Activated T-helper 2 cell treated with anti-CD3 and anti-CD28 coated beads, Interferon-gamma antibody, Interleukin-2, Interleukin-4, amounts not matched to agents 10 μg/mL and 5 μg/mL and 100 μg/mL, durations not matched to agents 14 hours and 24 hours and 36 hours (primary cell): ENCODE measurements at regions of chr15 and their contacts with region 1.

Region 1: DNA sequence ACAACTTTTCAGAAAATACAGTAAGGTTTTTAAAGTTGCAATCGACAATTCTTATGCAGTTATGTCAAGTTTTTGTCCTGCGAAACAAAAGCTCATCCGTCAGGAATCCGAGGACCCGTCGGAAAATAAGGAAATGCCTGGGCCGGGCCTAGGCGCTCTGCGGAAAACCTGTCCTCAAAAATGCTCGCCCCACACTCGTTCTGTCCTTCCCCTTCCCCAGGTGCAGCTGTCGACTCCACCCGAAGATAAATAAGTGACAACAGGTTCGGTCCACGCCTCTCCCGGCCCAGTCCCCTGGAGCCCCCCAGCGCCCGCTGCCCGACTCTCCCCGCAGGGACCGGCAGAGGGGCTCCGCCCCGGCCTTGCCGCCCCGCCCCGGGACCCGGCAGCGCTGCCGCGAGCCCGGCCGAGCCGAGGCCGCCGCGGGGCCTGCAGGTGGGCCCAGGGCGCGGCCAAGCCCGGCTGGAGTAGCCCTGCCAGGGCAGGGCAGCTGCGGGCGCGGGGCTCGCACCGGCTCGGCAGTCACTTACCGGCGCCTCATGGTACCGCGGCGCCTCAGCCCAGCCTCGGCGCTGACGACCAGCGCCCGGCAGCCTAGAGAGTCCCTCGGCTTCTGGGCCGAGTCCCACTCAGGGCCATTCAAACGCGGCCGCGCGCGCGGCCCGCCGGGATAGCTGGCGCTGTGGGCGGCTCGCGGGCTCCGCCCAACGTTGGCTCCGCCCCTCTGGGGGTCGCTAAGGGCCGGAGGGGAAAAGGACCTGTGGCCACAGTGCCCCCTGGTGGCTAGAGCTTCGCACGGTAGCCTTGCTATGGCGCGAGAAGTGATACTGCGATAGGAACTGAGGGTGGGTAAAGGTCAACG is at the start of gene KATNBL1:
- DNase-seq: peak; percentile 89
- H3K4me3 Mint-ChIP-seq: peak within 1 kb of the TSS; percentile 87
- H3K27ac Mint-ChIP-seq: peak within 1 kb of the TSS; percentile 78
- H3K4me1 Mint-ChIP-seq: peaks cover 20% of the 10 kb centered on the region
- H3K27me3 Mint-ChIP-seq: no peaks in the 10 kb centered on the region
- total RNA-seq, gene KATNBL1: 42.0 and 42.3 TPM in 2 replicates

Region 2: DNA sequence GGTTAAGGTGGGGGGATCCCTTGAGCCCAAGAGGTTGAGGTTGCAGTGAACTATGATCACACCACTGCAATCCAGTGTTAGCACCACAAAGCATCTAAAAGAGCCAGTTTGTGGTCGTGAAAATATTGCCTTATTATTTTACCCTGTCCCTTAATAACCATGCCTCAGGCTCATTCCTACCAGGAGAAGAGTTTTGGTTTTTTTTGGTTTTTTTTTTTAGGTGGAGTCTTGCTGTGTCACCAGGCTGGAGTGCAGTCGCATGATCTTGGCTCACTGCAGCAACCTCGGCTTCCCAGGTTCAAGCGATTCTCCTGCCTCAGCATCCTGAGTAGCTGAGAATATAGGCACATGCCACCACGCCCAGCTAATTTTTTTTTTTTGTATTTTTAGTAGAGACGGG is 152.7 kb before region 1 on chr15:
- intact Hi-C with region 1: loop called (anchors 1 kb)
- DNase-seq: no peak
- H3K4me3 Mint-ChIP-seq: no peak overlapping the region
- H3K27ac Mint-ChIP-seq: no peak overlapping the region
- H3K4me1 Mint-ChIP-seq: no peaks in the 10 kb centered on the region
- H3K27me3 Mint-ChIP-seq: peaks cover 5% of the 10 kb centered on the region

Region 3: GRCh38 chr15:34109797-34110663 is 99.6 kb before region 1 on chr15:
- intact Hi-C with region 1: loop called (anchors 1 kb)
- DNase-seq: no peak
- H3K4me3 Mint-ChIP-seq: no peak overlapping the region
- H3K27ac Mint-ChIP-seq: no peak overlapping the region
- H3K4me1 Mint-ChIP-seq: peaks cover 7% of the 10 kb centered on the region
- H3K27me3 Mint-ChIP-seq: no peaks in the 10 kb centered on the region

Region 4: DNA sequence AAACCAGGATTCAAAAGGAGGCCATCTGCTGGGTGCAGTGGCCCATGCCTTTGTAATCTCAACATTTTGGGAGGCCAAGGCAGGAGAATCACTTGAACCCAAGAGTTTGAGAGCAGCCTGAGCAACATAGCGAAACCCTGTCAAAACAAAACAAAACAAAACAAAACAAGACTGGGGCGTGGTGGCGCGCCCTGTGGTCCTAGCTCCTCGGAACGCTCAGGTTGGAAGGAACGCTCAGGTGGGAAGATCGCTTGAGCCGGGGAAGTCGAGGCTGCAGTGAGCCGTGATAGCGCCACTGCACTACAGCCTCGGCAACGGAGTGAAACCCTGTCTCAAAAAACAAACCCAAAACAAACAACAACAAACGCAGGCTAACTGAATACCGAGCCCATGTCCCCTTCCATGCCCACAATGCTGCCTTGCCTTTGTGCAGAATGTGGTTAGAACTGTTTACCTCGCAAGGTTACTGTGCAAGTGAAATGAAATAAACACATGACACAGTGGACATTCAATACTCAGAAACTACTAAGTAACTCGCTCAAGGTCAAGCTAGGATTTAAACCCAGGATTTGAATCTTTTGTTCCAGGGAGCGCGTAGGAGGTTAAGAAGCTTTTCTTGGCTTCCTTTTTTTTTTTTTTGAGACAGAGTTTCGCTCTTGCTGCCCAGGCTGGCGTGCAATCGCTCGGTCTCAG is 14.4 kb after region 1 on chr15:
- intact Hi-C with region 1: loop called (anchors 1 kb)
- DNase-seq: no peak
- H3K4me3 Mint-ChIP-seq: peak overlapping the region; percentile 96
- H3K27ac Mint-ChIP-seq: peak overlapping the region; percentile 98
- H3K4me1 Mint-ChIP-seq: peaks cover 28% of the 10 kb centered on the region
- H3K27me3 Mint-ChIP-seq: no peaks in the 10 kb centered on the region